Activated CD4-positive, alpha-beta T cell treated with anti-CD3 and anti-CD28 coated beads for 36 hours (primary cell): ENCODE measurements at regions of chr6 and their contacts with region 1.

Region 1: GRCh38 chr6:55886185-55886836 is 10.9 kb upstream of the BMP5 start:
- DNase-seq: no peak
- ATAC-seq: no peak
- H3K4me3 Mint-ChIP-seq: no peak overlapping the region
- H3K27ac Mint-ChIP-seq: no peak overlapping the region
- H3K4me1 Mint-ChIP-seq: no peaks in the 10 kb centered on the region
- H3K27me3 Mint-ChIP-seq: no peaks in the 10 kb centered on the region

Region 2: GRCh38 chr6:55276745-55277530 is 609.4 kb before region 1 on chr6:
- CTCF ChIA-PET with region 1: no interaction called
- POLR2A ChIA-PET with region 1: no interaction called
- intact Hi-C with region 1: loop called in 1 of 2 experiments (anchors 2 kb)
- DNase-seq: peak; percentile 21
- ATAC-seq: no peak
- H3K4me3 Mint-ChIP-seq: no peak overlapping the region
- H3K27ac Mint-ChIP-seq: no peak overlapping the region
- H3K4me1 Mint-ChIP-seq: no peaks in the 10 kb centered on the region
- H3K27me3 Mint-ChIP-seq: no peaks in the 10 kb centered on the region

Region 3: DNA sequence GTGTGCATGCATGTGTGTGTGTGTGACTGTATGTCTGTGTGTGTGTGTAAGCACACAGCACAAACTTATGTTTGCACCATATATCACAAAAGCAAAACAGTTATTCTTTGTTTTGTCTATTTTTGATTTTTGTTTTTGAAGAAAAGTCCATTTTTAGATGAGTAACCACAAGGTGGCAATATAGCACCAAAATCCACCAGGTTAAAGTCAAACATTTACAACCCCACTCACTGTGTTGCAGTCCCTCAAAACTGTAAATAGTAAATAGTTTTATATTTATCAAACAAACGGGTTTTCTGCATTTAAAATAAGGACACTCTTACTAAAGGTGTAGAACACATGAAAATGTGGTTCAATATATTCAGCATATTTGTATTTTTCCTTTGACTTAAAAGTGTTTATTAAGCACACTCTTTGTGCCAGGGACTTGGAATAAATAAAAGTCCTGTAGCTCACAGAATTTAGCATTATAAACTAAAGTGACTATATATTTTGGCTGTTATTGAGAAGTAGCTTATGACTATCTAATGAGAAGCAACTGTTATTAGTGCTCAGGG is 440.6 kb before region 1 on chr6:
- CTCF ChIA-PET with region 1: no interaction called
- POLR2A ChIA-PET with region 1: no interaction called
- intact Hi-C with region 1: loop called in 1 of 2 experiments (anchors 2 kb)
- DNase-seq: no peak
- ATAC-seq: no peak
- H3K4me3 Mint-ChIP-seq: no peak overlapping the region
- H3K27ac Mint-ChIP-seq: no peak overlapping the region
- H3K4me1 Mint-ChIP-seq: no peaks in the 10 kb centered on the region
- H3K27me3 Mint-ChIP-seq: no peaks in the 10 kb centered on the region

Region 4: GRCh38 chr6:55474382-55474781 is 411.9 kb before region 1 on chr6:
- CTCF ChIA-PET with region 1: no interaction called
- POLR2A ChIA-PET with region 1: no interaction called
- intact Hi-C with region 1: no loop called
- DNase-seq: no peak
- ATAC-seq: no peak
- H3K4me3 Mint-ChIP-seq: no peak overlapping the region
- H3K27ac Mint-ChIP-seq: no peak overlapping the region
- H3K4me1 Mint-ChIP-seq: no peaks in the 10 kb centered on the region
- H3K27me3 Mint-ChIP-seq: no peaks in the 10 kb centered on the region

Region 5: DNA sequence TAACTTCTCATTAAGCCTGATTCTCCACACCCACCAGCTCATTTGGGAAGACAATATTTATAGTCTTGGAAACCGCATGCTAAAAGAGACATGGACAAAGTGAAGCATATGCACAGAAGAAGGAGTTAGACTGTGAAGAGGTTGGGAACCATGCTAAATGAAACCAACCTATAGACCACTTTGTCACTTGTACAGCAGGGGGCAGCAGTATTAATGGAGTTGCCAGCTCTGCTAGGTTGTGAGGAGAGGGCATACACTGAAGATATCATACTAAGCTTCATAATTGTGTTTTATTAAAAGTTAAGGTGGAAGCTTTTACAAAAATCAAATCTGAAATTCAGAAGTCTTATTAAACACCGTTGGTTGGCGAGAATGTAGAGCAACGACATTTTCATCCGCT is 269.0 kb before region 1 on chr6:
- CTCF ChIA-PET with region 1: no interaction called
- POLR2A ChIA-PET with region 1: no interaction called
- intact Hi-C with region 1: loop called in 1 of 2 experiments (anchors 1 kb)
- DNase-seq: peak; percentile 18
- ATAC-seq: no peak
- H3K4me3 Mint-ChIP-seq: no peak overlapping the region
- H3K27ac Mint-ChIP-seq: no peak overlapping the region
- H3K4me1 Mint-ChIP-seq: no peaks in the 10 kb centered on the region
- H3K27me3 Mint-ChIP-seq: no peaks in the 10 kb centered on the region